Spleen (tissue), 13 donors: ENCODE measurements at regions of chr3 and their contacts with region 1.

Region 1: DNA sequence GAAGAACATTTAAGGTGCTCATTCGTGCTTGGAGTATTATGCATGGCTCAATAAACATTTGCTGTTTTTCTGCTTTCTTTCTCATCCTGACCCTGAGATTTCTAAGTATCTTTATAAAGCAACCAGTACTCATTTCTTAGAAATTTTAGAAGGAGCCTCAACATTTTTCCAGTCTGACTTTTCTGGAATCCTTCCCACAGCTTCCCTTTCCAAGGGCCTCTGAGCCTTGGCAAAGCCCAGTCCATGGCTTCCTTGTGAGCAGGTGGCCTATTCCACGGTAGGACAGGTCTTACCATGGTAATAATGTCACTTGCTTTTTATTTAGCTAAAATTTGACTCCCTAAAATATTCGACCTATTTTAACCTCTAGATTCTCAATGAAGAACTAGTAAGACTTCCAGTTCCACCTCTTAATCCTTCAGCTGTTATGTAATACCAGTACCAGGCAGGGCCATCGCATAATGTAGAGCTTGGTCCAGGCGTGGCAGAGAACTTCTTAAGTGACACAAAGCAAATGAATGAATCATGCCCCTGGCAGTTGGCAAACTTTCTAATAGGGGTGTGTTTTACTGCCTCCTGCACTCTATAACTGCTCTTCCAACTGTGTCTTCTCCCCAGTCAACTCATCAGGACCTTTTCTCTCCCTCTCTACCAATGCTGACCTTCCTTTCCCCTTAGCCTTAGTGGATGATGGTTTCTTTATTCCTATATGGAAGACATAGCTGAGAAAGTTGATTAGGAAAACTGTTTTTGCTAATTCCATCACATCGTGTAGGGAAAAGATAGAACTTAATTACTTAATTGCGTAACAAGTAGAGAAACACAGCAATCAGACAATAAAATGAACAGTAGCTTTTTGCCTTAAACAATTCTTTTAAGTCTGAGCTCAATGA is 894 bp upstream of the TM4SF4 start:
- DNase-seq: no peak
- H3K4me3 ChIP-seq: no peak overlapping the region
- H3K27ac ChIP-seq: peak overlapping the region in 3 of 8 donors; percentile 18 to 47 (median 26)
- H3K4me1 ChIP-seq: peaks cover 0 to 51% (median 8%) of the 10 kb centered on the region in 6 donors
- H3K27me3 ChIP-seq: no peaks in the 10 kb centered on the region
- CTCF ChIP-seq: no peak
- POLR2A ChIP-seq: no peak

Region 2: DNA sequence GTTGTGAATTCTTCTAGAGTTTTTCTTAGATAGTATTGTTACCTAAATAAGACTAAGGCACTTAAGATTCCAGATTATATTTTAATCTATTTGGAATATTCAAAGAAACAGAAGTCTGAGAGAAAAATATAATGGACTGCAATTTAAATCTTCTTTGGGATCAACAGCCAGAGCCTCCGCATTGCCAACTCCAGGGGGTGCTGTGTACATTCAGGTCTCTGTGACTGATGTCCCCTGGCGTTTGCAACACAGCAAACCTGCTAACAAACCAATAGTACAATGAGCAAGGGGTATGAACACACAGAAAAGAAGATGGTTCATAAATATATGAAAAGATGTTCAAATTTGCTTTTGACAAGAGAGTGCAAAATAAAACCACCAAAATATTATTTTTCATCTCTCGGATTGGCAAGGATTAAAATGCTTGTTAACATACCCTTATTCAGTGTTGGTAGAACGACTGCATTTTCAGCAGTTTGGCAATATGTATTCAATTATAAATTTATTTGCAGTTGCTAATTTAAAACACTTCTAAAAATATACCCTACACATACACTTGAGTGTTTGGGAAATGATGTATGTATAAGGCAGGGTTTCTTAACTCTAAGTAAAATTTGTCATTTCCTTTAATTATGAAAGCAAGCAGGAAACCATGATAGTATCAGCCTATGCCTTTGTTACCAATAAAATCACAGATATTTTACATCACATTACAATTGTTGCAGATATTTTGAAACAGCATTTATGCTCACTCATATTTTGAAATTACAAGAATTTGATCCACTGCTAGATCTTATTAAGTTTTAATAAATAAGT is 80.0 kb before region 1 on chr3:
- intact Hi-C with region 1: loop called (anchors 10 kb)
- DNase-seq: peak; percentile 85
- H3K4me3 ChIP-seq: no peak overlapping the region
- H3K27ac ChIP-seq: no peak overlapping the region
- H3K4me1 ChIP-seq: peaks cover 0 to 15% (median 11%) of the 10 kb centered on the region in 6 donors
- H3K27me3 ChIP-seq: no peaks in the 10 kb centered on the region
- CTCF ChIP-seq: peak; percentile 36 to 81 (median 73)
- POLR2A ChIP-seq: no peak

Region 3: DNA sequence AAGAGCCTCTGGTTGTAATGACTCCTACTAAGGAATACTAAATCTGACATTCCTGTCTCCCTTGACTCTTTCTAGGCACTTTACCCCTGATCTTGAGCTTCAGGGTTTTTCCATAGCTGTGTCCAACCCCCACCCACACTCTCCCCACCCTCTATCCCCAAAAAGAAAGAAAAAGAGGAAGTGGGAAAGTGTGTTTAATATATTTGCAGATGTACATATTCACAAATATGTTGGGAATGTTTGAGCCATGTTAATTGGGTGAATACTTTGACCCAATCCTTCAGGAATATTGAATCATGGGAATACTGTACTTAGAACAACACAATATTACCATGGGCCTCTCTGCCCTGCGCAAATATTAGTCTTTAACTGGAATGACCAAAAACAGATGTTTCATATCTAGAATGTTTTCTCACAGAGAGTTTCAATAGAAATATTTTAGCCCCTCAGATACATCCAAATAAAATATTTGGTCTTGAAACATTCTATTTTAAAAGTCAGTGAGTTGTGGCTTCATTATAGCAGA is 516.9 kb after region 1 on chr3:
- intact Hi-C with region 1: no loop called
- DNase-seq: no peak
- H3K4me3 ChIP-seq: no peak overlapping the region
- H3K27ac ChIP-seq: no peak overlapping the region
- H3K4me1 ChIP-seq: no peaks in the 10 kb centered on the region
- H3K27me3 ChIP-seq: peaks cover 0 to 6% (median 0%) of the 10 kb centered on the region in 7 donors
- CTCF ChIP-seq: no peak
- POLR2A ChIP-seq: no peak